Dendritic cell treated with granulocyte-macrophage colony-stimulating factor and Interleukin-4, amounts not matched to agents 40 ng/mL and 50 ng/mL, for 4 days (primary cell): ENCODE measurements at regions of chr10 and their contacts with region 1.

Region 1: DNA sequence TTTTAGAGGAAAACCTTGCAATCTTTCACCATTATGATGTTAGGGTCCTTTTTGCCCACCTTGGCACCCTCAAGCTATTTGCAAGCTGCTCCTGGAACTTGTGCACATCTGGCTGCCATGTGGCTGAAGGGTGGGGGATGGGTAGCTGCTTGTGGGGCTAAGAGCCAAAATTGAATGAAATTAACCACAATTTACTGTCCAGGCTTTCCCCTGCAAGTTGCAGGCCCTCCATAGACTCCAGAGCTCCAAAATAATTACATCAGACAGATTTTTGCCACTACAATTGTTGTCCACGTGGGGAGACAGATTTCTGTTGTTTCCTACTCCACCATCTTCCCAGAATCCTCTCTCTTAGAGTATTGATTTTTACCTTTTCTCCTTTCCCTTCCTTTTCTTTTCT is 19.1 kb downstream of the PI4K2A start:
- H3K4me3 Mint-ChIP-seq: no peak overlapping the region
- H3K27ac Mint-ChIP-seq: no peak overlapping the region
- H3K4me1 Mint-ChIP-seq: peaks cover 22% of the 10 kb centered on the region
- H3K27me3 Mint-ChIP-seq: no peaks in the 10 kb centered on the region

Region 2: GRCh38 chr10:96967847-96968246 is 691.7 kb before region 1 on chr10:
- intact Hi-C with region 1: no loop called
- H3K4me3 Mint-ChIP-seq: no peak overlapping the region
- H3K27ac Mint-ChIP-seq: no peak overlapping the region
- H3K4me1 Mint-ChIP-seq: no peaks in the 10 kb centered on the region
- H3K27me3 Mint-ChIP-seq: no peaks in the 10 kb centered on the region

Region 3: GRCh38 chr10:97572214-97572989 is 87.2 kb before region 1 on chr10 and contains the start of gene ANKRD2:
- intact Hi-C with region 1: loop called (anchors 10 kb)
- H3K4me3 Mint-ChIP-seq: no peak within 1 kb of the TSS
- H3K27ac Mint-ChIP-seq: no peak within 1 kb of the TSS
- H3K4me1 Mint-ChIP-seq: no peaks in the 10 kb centered on the region
- H3K27me3 Mint-ChIP-seq: peaks cover under 1% of the 10 kb centered on the region

Region 4: DNA sequence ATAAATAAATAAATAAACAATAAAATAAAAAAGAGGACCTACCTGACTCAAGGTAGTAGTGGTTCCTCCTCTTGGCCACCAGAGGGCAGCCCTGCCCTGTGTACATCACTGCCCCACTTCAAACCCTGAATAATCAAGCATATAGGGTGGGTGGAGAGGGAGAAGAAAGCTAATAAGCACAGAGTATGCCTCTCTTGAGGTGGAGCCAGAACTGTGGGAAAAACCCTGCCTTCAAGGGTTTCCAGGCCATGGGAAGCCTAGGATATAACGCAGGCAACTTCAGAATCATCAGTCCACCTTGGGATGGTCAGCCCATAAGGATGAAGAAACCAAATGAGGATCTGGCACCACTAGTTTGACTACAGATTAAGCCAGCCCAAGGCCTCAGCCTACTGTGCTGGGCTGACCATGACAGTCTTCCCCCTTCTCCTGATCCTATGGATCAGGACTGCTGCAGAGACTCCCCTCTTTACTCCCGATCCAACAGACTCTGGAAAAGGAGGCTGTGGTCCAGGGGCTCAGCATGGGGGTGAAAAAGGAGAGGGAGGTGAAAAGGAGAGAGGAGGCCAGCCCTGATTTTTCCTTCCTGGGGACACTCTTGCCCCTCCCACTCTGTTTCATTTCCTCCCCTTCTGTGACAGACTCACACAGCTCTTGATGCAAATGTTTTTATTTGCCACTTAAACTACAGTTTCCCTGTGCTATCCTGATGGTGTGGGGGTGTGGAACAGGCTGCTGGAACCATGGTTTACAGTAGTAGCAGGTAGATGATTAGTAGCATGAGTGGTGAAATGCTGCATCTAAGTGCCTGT is 17.4 kb after region 1 on chr10:
- intact Hi-C with region 1: loop called (anchors 1 kb)
- H3K4me3 Mint-ChIP-seq: no peak overlapping the region
- H3K27ac Mint-ChIP-seq: peak overlapping the region; percentile 77
- H3K4me1 Mint-ChIP-seq: peaks cover 50% of the 10 kb centered on the region
- H3K27me3 Mint-ChIP-seq: no peaks in the 10 kb centered on the region